Thyroid gland (tissue), 4 donors: ENCODE measurements at regions of chr6 and their contacts with region 1.

Region 1: DNA sequence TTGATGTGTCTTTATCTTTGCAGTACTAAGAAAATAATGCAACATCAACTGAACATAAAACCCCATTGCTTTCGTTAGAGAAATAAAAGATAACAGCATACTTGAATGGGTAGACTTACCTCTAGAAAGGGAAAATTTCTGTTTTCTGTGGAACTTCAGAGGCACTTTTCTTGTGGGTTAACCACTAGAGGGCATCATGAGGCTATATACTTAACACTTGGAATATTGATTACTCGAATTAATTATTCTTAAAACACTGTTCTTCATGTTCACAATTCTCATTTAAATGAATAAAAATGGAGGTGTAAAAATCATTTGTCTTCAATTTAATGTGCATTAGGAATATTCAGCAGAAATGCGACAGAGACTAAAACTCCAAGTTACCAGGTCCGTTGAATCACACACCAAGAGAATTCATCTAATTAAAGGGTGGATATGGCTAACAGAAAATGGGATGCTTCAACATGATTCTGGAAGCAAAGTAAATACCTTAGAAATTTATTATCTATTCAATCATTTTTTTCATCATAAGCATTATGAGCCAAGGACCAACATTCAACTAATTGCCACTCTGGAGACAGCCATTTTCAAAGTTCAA is 330.8 kb upstream of the PREP start:
- DNase-seq: no peak
- H3K4me3 ChIP-seq: no peak overlapping the region
- H3K27ac ChIP-seq: no peak overlapping the region
- H3K4me1 ChIP-seq: no peaks in the 10 kb centered on the region
- H3K27me3 ChIP-seq: no peaks in the 10 kb centered on the region
- CTCF ChIP-seq: peak; percentile 26 to 79 (median 48)
- POLR2A ChIP-seq: no peak

Region 2: DNA sequence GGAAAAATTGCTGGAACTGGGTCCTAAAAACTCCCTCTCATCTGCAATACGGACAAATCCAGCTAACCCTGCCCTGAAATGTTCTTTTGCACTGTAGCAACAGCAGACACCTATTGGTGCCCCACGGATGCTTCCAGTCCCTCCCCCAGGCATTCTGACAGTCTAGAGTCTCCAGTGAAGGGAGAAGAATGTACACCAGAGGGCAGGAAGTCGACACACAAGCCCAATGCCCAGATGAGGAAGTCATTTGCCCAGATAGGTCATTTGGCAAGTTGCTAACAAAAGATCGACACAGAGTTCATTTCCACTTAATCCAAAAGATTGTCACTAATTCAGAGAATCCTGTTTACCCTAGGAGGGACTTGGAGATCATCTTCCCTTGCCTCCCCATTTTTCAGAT is 59.5 kb after region 1 on chr6:
- intact Hi-C with region 1: loop called (anchors 10 kb)
- DNase-seq: no peak
- H3K4me3 ChIP-seq: no peak overlapping the region
- H3K27ac ChIP-seq: no peak overlapping the region
- H3K4me1 ChIP-seq: peaks cover 33 to 45% of the 10 kb centered on the region in 2 donors
- H3K27me3 ChIP-seq: no peaks in the 10 kb centered on the region
- CTCF ChIP-seq: no peak
- POLR2A ChIP-seq: no peak

Region 3: GRCh38 chr6:105981002-105981887 is 247.6 kb after region 1 on chr6:
- intact Hi-C with region 1: loop called (anchors 10 kb)
- DNase-seq: peak; percentile 17 to 22
- H3K4me3 ChIP-seq: peak overlapping the region in 2 of 3 donors; percentile 5 to 29
- H3K27ac ChIP-seq: no peak overlapping the region
- H3K4me1 ChIP-seq: peaks cover 11 to 19% of the 10 kb centered on the region in 2 donors
- H3K27me3 ChIP-seq: no peaks in the 10 kb centered on the region
- CTCF ChIP-seq: no peak
- POLR2A ChIP-seq: no peak

Region 4: DNA sequence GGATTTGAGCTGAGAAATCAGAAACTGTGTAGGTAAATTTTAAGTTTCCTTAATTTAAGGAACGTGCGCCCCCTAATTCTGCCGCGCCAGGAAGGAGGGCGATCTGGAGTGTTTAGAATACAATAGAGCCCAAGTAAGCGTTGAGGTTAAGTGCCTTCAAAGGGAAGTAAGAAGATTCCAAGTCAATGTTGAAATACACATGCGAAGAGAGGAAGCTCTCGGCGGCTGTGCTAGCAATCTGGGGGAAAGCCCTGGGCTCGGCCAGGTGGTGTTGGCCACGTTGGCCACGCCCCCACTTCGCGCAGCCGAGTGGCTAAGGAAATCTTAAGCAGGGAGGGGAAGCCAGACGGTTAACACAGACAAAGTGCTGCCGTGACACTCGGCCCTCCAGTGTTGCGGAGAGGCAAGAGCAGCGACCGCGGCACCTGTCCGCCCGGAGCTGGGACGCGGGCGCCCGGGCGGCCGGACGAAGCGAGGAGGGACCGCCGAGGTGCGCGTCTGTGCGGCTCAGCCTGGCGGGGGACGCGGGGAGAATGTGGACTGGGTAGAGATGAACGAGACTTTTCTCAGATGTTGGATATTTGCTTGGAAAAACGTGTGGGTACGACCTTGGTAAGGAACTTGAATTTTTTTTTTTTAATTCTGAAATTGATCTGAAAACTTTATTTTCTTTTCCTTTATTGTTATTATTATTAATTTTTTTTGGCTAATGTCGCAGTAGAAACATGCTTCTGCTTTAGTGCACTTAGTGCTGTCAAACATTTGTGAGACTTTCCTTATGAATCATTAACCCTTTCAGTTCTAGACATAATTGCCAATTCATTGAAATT is 352.5 kb after region 1 on chr6 and contains the start of gene PRDM1:
- intact Hi-C with region 1: loop called (anchors 10 kb)
- DNase-seq: peak; percentile 96
- H3K4me3 ChIP-seq: peak within 1 kb of the TSS in 2 of 3 donors; percentile 31 to 39
- H3K27ac ChIP-seq: peak within 1 kb of the TSS; percentile 27 to 69 (median 68)
- H3K4me1 ChIP-seq: peaks cover 22 to 25% of the 10 kb centered on the region in 2 donors
- H3K27me3 ChIP-seq: no peaks in the 10 kb centered on the region
- CTCF ChIP-seq: peak in 4 of 6 experiments; percentile 27 to 48 (median 30)
- POLR2A ChIP-seq: peak; percentile 78 to 92
- total RNA-seq, gene PRDM1: 5.6 to 7.6 (median 7.0) TPM